ENCODE measurements at regions of chr2 and their contacts with region 1.

Region 1: GRCh38 chr2:161414042-161415033 is 1.8 kb upstream of the TBR1 start:
- DNase-seq: peak; percentile 57
- ATAC-seq: peak; percentile 77
- H3K4me3 ChIP-seq: peak overlapping the region; percentile 65
- H3K27ac ChIP-seq: no peak overlapping the region
- H3K4me1 ChIP-seq: peaks cover 19% of the 10 kb centered on the region
- H3K27me3 ChIP-seq: no peaks in the 10 kb centered on the region
- CTCF ChIP-seq: 0 out of 2 replicates have a peak, but pooled peaks have one; percentile 9

Region 2: GRCh38 chr2:161308178-161308955 is 106.0 kb before region 1 on chr2 and contains the start of gene PSMD14:
- CTCF ChIA-PET with region 1: no interaction called
- POLR2A ChIA-PET with region 1: no interaction called
- intact Hi-C with region 1: loop called (anchors 2 kb)
- DNase-seq: peak; percentile 96
- ATAC-seq: peak; percentile 95
- H3K4me3 ChIP-seq: peak within 1 kb of the TSS; percentile 84
- H3K27ac ChIP-seq: peak within 1 kb of the TSS; percentile 83
- H3K4me1 ChIP-seq: peaks cover 14% of the 10 kb centered on the region
- H3K27me3 ChIP-seq: no peaks in the 10 kb centered on the region
- CTCF ChIP-seq: no peak
- total RNA-seq, gene PSMD14: 136 and 151 TPM in 2 replicates

Region 3: GRCh38 chr2:161556440-161556839 is 142.1 kb after region 1 on chr2:
- CTCF ChIA-PET with region 1: no interaction called
- POLR2A ChIA-PET with region 1: no interaction called
- intact Hi-C with region 1: loop called (anchors 10 kb)
- DNase-seq: peak; percentile 44
- ATAC-seq: 0 out of 2 replicates have a peak, but pooled peaks have one; percentile 35
- H3K4me3 ChIP-seq: no peak overlapping the region
- H3K27ac ChIP-seq: no peak overlapping the region
- H3K4me1 ChIP-seq: no peaks in the 10 kb centered on the region
- H3K27me3 ChIP-seq: no peaks in the 10 kb centered on the region
- CTCF ChIP-seq: peak; percentile 60